ENCODE measurements at regions of chr1 and their contacts with region 1.

Region 1: GRCh38 chr1:163231385-163231784 is 28.7 kb upstream of the RGS5 start:
- DNase-seq: no peak
- H3K4me3 ChIP-seq: peak overlapping the region in 1 of 2 donors; percentile 31
- H3K27ac ChIP-seq: peak overlapping the region; percentile 83 to 84
- H3K4me1 ChIP-seq: peaks cover 6 to 25% of the 10 kb centered on the region in 2 donors
- H3K27me3 ChIP-seq: no peaks in the 10 kb centered on the region
- CTCF ChIP-seq: no peak

Region 2: GRCh38 chr1:163174524-163175437 is 56.6 kb before region 1 on chr1:
- intact Hi-C with region 1: loop called (anchors 5 kb)
- DNase-seq: peak in 1 of 2 donors; percentile 82
- H3K4me3 ChIP-seq: peak overlapping the region; percentile 44 to 56
- H3K27ac ChIP-seq: peak overlapping the region; percentile 82 to 85
- H3K4me1 ChIP-seq: peaks cover 0 to 52% of the 10 kb centered on the region in 2 donors
- H3K27me3 ChIP-seq: no peaks in the 10 kb centered on the region
- CTCF ChIP-seq: peak; percentile 84 to 86 (median 84)

Region 3: GRCh38 chr1:163202833-163203451 is 28.4 kb before region 1 on chr1 and contains the start of gene RGS5:
- intact Hi-C with region 1: loop called (anchors 2 kb)
- DNase-seq: peak in 1 of 2 donors; percentile 79
- H3K4me3 ChIP-seq: peak within 1 kb of the TSS; percentile 51 to 77
- H3K27ac ChIP-seq: peak within 1 kb of the TSS; percentile 75 to 83
- H3K4me1 ChIP-seq: peaks cover 0 to 6% of the 10 kb centered on the region in 2 donors
- H3K27me3 ChIP-seq: no peaks in the 10 kb centered on the region
- CTCF ChIP-seq: no peak
- total RNA-seq, gene RGS5: 732 TPM

Region 4: GRCh38 chr1:163250382-163250974 is 19.1 kb after region 1 on chr1:
- intact Hi-C with region 1: loop called (anchors 2 kb)
- DNase-seq: no peak
- H3K4me3 ChIP-seq: no peak overlapping the region
- H3K27ac ChIP-seq: peak overlapping the region; percentile 88 to 90
- H3K4me1 ChIP-seq: peaks cover 0 to 22% of the 10 kb centered on the region in 2 donors
- H3K27me3 ChIP-seq: no peaks in the 10 kb centered on the region
- CTCF ChIP-seq: no peak

Region 5: DNA sequence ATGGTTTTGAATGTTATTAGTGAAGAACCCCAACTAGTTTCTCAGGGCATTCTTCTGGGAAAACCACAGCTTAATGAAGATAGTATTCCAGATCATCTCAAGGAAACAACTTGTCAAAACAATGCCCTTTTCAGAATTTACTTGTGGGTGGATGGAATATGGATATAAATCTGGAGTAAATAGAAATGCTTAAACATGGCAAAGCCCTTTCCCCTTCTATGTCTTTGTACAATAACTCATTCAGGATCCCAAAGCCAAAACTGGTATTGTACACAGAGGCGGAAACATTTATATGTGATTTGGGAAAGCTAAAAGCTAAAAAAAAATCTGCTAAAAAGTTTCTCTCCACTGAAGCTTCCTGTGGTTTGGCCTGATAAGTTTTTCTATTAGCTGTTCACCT is 26.8 kb after region 1 on chr1:
- intact Hi-C with region 1: loop called (anchors 1 kb)
- DNase-seq: no peak
- H3K4me3 ChIP-seq: no peak overlapping the region
- H3K27ac ChIP-seq: peak overlapping the region; percentile 62 to 76
- H3K4me1 ChIP-seq: peaks cover 3 to 8% of the 10 kb centered on the region in 2 donors
- H3K27me3 ChIP-seq: no peaks in the 10 kb centered on the region
- CTCF ChIP-seq: no peak